ENCODE measurements at regions of chr17 and their contacts with region 1.

Region 1: DNA sequence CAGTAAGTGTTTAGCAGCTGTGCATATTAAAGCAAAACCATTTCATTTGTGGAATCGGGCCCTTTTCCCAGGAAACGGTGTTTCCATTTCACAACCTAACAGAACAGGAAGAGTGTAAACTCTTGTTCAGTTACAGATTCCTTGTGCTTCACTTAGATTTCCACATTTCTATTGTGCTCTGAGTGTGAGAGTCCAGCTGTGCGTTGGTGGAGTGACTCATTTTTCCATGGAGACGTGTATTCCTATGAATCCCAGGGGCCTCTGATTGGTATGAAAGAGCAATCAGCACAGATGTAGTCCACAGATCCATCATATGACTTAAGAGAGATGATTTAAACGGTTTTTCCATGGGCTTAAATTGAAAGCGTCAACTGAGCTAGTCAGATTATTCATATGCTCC is 13.3 kb upstream of the CAVIN1 start:
- DNase-seq: peak in 1 of 2 donors; percentile 85
- H3K4me3 ChIP-seq: no peak overlapping the region
- H3K27ac ChIP-seq: peak overlapping the region; percentile 28 to 60
- H3K4me1 ChIP-seq: no peaks in the 10 kb centered on the region
- H3K27me3 ChIP-seq: no peaks in the 10 kb centered on the region
- CTCF ChIP-seq: no peak

Region 2: DNA sequence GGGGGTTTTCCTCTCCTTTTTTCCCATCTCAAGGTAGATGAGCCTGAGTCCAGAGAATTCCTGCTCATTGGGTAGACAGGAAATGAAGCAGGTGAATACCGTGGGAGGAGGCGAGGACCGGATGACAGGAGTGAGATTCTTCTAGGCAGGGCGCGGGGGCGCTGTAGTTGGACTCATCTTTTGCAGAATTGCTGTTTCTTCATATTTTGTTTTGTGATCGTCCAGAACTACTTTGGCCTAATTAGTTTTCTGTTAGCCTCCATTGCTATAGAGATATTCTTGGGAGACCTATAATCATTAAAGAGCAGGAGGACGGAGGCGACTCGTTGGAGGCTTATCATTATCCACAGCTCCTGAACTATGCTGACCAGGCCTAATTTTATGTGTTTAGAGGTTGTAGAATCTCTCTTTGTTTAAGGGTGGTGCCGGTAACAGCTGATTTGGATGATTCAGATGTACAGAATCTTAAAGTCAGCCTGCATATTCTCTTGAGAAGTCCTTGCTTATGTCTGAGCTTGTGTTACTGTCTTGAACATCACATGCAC is 22.9 kb after region 1 on chr17:
- intact Hi-C with region 1: loop called (anchors 2 kb)
- DNase-seq: peak in 1 of 2 donors; percentile 69
- H3K4me3 ChIP-seq: peak overlapping the region; percentile 76 to 90
- H3K27ac ChIP-seq: peak overlapping the region; percentile 92 to 98
- H3K4me1 ChIP-seq: peaks cover 4 to 24% of the 10 kb centered on the region in 2 donors
- H3K27me3 ChIP-seq: no peaks in the 10 kb centered on the region
- CTCF ChIP-seq: peak in 2 of 3 experiments; percentile 12 to 45

Region 3: GRCh38 chr17:42554250-42555121 is 118.1 kb after region 1 on chr17:
- intact Hi-C with region 1: no loop called
- DNase-seq: peak in 1 of 2 donors; percentile 93
- H3K4me3 ChIP-seq: peak overlapping the region; percentile 82 to 83
- H3K27ac ChIP-seq: peak overlapping the region; percentile 82 to 91
- H3K4me1 ChIP-seq: peaks cover 0 to 19% of the 10 kb centered on the region in 2 donors
- H3K27me3 ChIP-seq: no peaks in the 10 kb centered on the region
- CTCF ChIP-seq: no peak

Measured in ascending aorta (tissue), 2 donors.